Activated T-helper 2 cell treated with anti-CD3 and anti-CD28 coated beads, Interferon-gamma antibody, Interleukin-2, Interleukin-4, amounts not matched to agents 10 μg/mL and 5 μg/mL and 100 μg/mL, durations not matched to agents 14 hours and 24 hours and 36 hours (primary cell): ENCODE measurements at regions of chr17 and their contacts with region 1.

Region 1: DNA sequence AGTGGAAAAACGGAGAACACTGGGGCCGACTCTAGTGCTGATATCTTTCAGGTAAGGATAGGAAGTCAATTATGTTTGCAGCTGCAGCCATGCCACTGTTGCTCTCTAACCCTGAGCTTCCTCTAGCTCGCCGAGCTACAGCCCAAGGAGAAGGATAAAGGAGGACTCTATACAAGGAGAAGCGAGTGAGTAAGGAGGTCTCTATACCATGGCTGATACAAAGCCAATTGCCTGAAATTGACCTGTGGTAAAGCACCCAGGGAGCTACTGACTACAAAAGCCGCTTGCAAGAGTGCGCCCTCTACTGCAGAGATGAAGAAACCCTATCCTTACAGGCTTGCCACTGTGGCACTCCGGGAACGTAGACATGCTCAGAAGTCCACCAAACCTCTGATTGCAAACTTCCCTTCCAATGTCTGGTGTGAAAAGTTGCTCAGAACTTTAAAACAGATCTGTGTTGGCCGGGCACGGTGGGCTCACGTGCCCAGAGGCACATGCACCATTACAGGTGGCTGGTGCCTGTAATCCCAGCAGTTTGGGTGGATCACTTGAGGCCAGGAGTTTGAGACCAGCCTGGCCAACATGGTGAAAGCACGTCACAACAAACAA is 10.8 kb upstream of the SLC46A1 start:
- DNase-seq: peak; percentile 32
- H3K4me3 Mint-ChIP-seq: no peak overlapping the region
- H3K27ac Mint-ChIP-seq: no peak overlapping the region
- H3K4me1 Mint-ChIP-seq: no peaks in the 10 kb centered on the region
- H3K27me3 Mint-ChIP-seq: peaks cover 18% of the 10 kb centered on the region

Region 2: GRCh38 chr17:28008542-28008941 is 408.3 kb before region 1 on chr17:
- intact Hi-C with region 1: no loop called
- DNase-seq: no peak
- H3K4me3 Mint-ChIP-seq: no peak overlapping the region
- H3K27ac Mint-ChIP-seq: no peak overlapping the region
- H3K4me1 Mint-ChIP-seq: no peaks in the 10 kb centered on the region
- H3K27me3 Mint-ChIP-seq: peaks cover 5% of the 10 kb centered on the region

Region 3: DNA sequence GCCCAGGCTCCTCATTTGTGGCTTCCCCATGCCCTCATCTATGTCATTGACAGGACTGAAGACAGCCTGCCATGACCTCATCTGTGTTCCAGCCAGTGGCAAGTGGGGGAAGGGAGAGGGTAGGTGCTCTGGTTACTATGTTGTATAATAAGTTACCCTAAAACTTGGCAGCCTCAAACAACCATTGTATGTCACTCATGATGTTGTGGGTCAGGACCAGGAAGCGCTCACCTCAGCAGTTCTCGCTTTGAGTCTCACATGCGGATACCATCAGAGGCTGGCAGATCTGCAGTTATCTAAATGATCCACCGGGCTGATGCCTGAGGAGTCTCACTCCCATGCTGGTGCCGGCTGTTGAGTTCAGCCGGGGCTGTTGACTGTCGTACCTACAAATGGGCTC is 186.8 kb before region 1 on chr17:
- intact Hi-C with region 1: loop called (anchors 5 kb)
- DNase-seq: peak; percentile 20
- H3K4me3 Mint-ChIP-seq: no peak overlapping the region
- H3K27ac Mint-ChIP-seq: no peak overlapping the region
- H3K4me1 Mint-ChIP-seq: peaks cover 12% of the 10 kb centered on the region
- H3K27me3 Mint-ChIP-seq: peaks cover 53% of the 10 kb centered on the region

Region 4: DNA sequence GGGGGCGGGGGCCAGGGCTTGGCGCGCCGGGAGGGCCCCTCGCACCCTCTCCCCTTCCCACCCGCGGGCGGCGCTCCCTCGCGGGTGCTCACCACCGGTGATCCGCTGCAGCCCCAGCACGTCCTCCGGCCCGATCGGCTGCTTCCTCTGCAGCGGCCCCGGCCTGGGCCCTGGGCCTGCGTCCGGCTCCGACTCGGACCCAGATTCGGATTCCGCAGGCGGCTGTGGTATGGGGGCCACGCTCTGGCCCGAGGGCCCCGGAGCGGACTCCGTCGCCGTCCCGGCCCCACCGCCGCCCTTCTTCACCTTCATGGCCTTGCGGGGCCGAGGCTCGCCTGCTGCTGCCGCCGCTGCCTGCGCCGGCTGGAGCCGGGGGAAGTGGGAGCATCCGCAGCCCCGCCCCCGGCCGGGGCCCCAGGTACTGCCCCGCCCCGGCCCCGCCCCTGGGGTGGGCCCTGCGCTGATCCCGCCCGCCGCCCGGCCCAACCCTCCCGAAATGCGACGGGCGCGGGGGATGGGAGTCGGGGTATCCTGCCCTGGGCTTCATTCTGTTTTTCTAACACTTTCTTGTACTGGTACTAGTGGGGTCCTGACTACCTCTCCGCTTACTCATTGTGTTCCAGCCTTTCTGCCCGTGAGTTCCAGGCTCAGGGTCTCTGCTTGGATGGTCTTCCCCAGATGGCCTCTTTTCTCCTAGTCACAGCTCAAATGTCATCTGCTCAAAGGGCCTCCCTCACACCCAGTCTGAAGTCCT is 135.6 kb after region 1 on chr17 and contains the start of gene UNC119:
- intact Hi-C with region 1: loop called (anchors 10 kb)
- DNase-seq: peak; percentile 70
- H3K4me3 Mint-ChIP-seq: peak within 1 kb of the TSS; percentile 97
- H3K27ac Mint-ChIP-seq: peak within 1 kb of the TSS; percentile 76
- H3K4me1 Mint-ChIP-seq: peaks cover 47% of the 10 kb centered on the region
- H3K27me3 Mint-ChIP-seq: no peaks in the 10 kb centered on the region
- total RNA-seq, gene UNC119: 55.3 and 63.9 TPM in 2 replicates